ENCODE measurements at regions of chr9 and their contacts with region 1.

Region 1: GRCh38 chr9:113410207-113410864 is at the starts of genes C9orf43 and POLE3:
- DNase-seq: peak; percentile 98
- ATAC-seq: peak; percentile 99
- total RNA-seq, gene C9orf43: 0.24 TPM
- total RNA-seq, gene POLE3: 22.6 TPM

Region 2: DNA sequence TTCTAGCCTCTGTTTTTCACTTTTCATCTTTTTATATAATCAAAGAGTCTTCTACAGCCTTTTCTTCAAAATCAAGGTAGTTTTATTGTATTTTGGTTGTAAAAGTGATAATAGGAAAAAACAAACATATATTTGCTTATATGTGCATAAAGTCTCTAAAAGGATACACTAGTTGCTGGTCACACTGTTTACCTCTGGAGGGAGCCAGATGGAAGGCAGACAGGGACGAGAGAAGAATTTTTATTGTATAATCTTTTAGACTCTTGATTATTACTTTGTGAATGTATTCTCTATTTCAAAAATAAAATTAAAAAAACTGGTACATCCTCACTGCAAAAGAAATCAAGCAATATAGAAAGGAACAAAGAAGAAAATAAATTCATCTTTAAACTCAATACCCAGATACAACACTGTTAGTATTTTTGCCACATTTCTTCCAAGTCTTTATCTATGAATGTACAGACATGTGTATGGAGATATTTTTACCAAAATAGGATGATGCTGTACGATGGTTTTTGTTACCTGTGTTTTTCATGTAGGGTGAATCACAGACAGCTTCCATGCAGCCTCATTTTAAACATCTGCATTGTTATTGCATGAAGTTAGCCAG is 101.0 kb before region 1 on chr9:
- intact Hi-C with region 1: loop called (anchors 1 kb)
- DNase-seq: no peak
- ATAC-seq: no peak

Region 3: GRCh38 chr9:113886466-113886865 is 476.1 kb after region 1 on chr9:
- intact Hi-C with region 1: loop called (anchors 10 kb)
- DNase-seq: no peak
- ATAC-seq: no peak

Measured in Right ventricle myocardium inferior (tissue), 1 donor.